Sigmoid colon (tissue), 7 donors: ENCODE measurements at regions of chr5 and their contacts with region 1.

Region 1: DNA sequence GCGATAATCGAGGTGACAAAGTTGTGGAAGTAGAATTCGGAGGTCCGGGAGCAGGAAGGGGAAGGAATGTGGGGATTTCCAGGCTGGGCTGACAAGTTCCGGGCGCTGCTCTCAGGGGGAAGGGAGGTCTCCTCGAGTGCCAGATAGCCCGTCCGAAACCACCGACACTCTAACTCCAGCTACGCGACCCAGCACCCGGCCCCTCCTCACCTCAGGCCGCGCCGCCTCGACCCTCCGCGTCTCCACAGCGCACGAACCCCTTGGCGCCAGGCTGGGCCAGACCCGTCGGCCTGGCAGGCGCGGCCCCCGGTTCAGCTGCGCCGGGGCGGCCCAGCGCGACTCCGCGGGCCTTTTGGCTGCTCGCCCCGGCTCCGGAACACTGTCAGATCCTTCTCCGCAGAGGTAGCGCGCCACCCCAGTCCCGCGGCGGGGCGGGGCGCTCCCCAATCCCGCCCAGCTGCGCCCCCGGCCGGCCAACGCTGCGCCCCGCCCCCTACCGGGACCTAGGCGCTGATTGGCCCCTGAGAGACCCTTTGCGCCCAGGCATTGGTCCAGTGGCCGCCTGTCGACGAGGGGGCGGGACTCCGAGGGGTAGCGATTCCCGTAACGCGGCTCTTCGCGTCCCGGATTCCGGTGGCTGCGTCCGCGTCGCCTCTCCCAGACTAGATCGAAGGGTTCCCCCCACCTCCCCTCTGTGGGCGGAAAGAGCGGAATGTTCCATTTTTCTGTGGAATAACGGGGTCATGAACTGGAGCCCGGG is at the start of gene IL6ST:
- DNase-seq: peak; percentile 99
- H3K4me3 ChIP-seq: peak within 1 kb of the TSS; percentile 63 to 92 (median 85)
- H3K27ac ChIP-seq: peak within 1 kb of the TSS; percentile 94 to 100 (median 99)
- H3K4me1 ChIP-seq: peaks cover 0 to 48% (median 45%) of the 10 kb centered on the region in 4 donors
- H3K27me3 ChIP-seq: no peaks in the 10 kb centered on the region
- CTCF ChIP-seq: no peak
- EP300 ChIP-seq: peak in 2 of 4 donors; percentile 33 to 54
- POLR2A ChIP-seq: peak; percentile 85 to 86
- total RNA-seq, gene IL6ST: 206 to 373 (median 311) TPM

Region 2: GRCh38 chr5:55936100-55936693 is 58.6 kb before region 1 on chr5:
- intact Hi-C with region 1: loop called (anchors 5 kb)
- DNase-seq: peak; percentile 87
- H3K4me3 ChIP-seq: no peak overlapping the region
- H3K27ac ChIP-seq: no peak overlapping the region
- H3K4me1 ChIP-seq: no peaks in the 10 kb centered on the region
- H3K27me3 ChIP-seq: no peaks in the 10 kb centered on the region
- CTCF ChIP-seq: peak; percentile 52 to 75 (median 64)
- EP300 ChIP-seq: no peak
- POLR2A ChIP-seq: no peak

Region 3: DNA sequence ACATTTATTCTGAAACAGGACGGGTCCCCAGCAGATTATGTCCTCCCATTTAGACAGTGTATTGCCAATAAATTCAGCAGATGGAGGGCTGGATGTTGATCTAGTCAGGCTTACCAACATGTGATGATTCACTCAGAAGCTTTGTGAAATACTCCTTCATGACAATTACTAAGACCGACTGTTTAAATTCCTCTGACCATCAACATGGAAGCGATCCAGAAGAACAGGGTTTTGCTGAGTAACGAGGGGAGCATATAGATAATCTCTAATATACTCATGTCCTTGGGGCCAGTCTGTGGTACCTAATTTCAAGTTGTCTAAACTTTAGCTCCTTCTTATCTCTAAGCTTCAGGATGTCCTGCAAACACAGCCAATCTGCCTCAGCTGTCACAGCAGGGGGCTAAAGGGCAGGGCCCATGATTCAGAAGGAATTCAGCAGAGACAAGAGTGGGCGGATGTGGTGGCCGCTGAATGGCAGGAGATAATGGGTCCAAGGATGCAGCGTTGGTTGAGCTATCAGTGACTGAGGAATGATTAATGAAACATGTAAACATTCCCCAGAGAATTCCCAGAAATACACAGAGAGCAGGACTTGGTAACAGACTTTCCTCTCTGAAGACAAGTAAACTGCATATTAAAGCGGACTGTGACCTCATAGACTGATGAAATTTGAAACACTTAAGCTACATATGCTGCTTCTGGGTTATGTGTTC is 128.9 kb after region 1 on chr5:
- intact Hi-C with region 1: loop called (anchors 5 kb)
- DNase-seq: peak; percentile 73
- H3K4me3 ChIP-seq: no peak overlapping the region
- H3K27ac ChIP-seq: peak overlapping the region in 3 of 4 donors; percentile 41 to 64 (median 44)
- H3K4me1 ChIP-seq: peaks cover 0 to 18% (median 10%) of the 10 kb centered on the region in 4 donors
- H3K27me3 ChIP-seq: no peaks in the 10 kb centered on the region
- CTCF ChIP-seq: no peak
- EP300 ChIP-seq: no peak
- POLR2A ChIP-seq: no peak

Region 4: GRCh38 chr5:56909294-56910209 is 914.8 kb after region 1 on chr5 and contains the start of gene SETD9:
- intact Hi-C with region 1: loop called (anchors 10 kb)
- DNase-seq: peak; percentile 99
- H3K4me3 ChIP-seq: peak within 1 kb of the TSS; percentile 54 to 73 (median 69)
- H3K27ac ChIP-seq: peak within 1 kb of the TSS; percentile 90 to 98 (median 96)
- H3K4me1 ChIP-seq: peaks cover 0 to 9% (median 7%) of the 10 kb centered on the region in 4 donors
- H3K27me3 ChIP-seq: no peaks in the 10 kb centered on the region
- CTCF ChIP-seq: no peak
- EP300 ChIP-seq: no peak
- POLR2A ChIP-seq: peak; percentile 68 to 69
- total RNA-seq, gene SETD9: 6.6 to 30.7 (median 19.4) TPM